ENCODE measurements at regions of chr2 and their contacts with region 1.

Region 1: DNA sequence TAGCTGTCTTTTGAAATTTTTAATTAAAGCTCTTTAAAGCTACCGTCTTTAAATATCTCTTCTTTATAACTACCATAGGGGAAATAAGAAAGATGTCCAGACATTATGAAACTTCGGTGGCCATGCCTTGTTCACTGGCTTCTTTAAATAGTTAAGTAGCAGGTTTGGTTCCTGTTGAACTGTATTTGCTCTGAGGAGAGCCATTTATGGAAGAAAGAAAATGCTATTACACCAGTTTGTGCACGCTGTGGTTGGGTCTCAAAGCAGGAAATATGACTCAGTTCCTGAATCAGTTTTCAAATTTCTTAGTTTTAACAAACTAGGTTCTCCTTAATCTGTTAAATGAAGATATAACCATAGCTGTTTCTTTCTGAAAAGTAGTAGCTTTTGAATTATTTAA is 12.2 kb downstream of the ARPC2 start:
- DNase-seq: peak; percentile 63
- H3K4me3 Mint-ChIP-seq: peak overlapping the region; percentile 33
- H3K27ac Mint-ChIP-seq: peak overlapping the region; percentile 86
- H3K4me1 Mint-ChIP-seq: peaks cover 82% of the 10 kb centered on the region
- H3K27me3 Mint-ChIP-seq: no peaks in the 10 kb centered on the region

Region 2: GRCh38 chr2:218186355-218186766 is 42.9 kb before region 1 on chr2:
- CTCF ChIA-PET with region 1: interaction called, 13 read pairs
- POLR2A ChIA-PET with region 1: interaction called, 6 read pairs
- DNase-seq: peak; percentile 75
- H3K4me3 Mint-ChIP-seq: no peak overlapping the region
- H3K27ac Mint-ChIP-seq: no peak overlapping the region
- H3K4me1 Mint-ChIP-seq: peaks cover 10% of the 10 kb centered on the region
- H3K27me3 Mint-ChIP-seq: peaks cover 8% of the 10 kb centered on the region

Region 3: DNA sequence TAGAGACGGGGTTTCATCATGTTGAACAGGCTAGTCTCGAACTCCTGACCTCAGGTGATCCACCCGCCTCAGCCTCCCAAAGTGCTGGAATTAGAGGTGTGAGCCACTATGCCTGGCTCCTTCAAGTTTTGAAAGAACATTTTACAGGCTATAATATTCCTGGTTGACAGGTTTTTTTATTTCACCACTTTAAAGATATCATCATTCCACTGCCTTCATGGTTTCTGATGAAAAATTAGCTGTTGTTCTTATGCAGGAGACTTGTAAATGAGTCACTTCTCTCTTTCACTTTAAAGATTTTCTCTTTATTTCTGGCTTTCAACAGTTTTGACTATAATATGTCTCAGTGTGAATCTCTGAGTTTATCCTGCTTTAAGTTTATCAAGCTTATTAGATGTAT is 20.2 kb before region 1 on chr2:
- CTCF ChIA-PET with region 1: interaction called, 12 read pairs
- POLR2A ChIA-PET with region 1: interaction called, 260 read pairs
- DNase-seq: no peak
- H3K4me3 Mint-ChIP-seq: no peak overlapping the region
- H3K27ac Mint-ChIP-seq: no peak overlapping the region
- H3K4me1 Mint-ChIP-seq: no peaks in the 10 kb centered on the region
- H3K27me3 Mint-ChIP-seq: peaks cover 13% of the 10 kb centered on the region

Region 4: DNA sequence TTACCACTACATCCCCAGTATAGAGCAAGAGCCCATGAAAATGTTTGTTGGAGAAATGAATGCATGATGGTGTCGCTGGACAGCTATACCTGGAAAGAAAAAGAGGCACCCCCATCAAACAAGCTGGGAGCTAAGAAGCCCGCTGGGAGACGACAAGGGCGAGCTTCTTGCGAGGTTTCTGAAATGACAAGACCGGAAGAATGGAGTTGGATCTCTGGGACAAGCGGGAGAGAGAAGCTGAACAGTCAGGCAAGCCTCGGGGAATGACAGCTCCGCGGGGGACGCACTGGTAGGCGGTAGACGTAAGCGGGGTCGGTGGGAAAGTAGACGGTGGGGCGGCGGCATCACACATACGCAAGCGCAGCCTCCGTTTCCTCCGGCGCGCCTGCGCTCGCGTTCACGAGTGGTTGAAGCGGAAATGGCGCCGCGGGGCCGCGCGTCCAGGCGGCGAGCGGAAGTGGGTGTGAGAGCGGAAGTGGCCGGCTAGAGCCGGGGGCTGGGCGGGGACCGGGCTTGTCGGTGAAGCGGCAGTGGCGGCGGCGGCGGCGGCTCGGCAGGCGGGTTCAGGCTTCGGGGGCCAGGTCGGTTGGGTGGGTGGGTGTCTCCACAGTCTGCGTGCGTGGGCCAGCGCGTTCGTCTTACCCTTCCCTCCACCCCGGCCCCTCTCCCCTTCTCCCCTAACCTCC is 12.4 kb before region 1 on chr2 and contains the start of gene ARPC2:
- CTCF ChIA-PET with region 1: interaction called, 62 read pairs
- POLR2A ChIA-PET with region 1: interaction called, 260 read pairs
- DNase-seq: peak; percentile 96
- H3K4me3 Mint-ChIP-seq: peak within 1 kb of the TSS; percentile 93
- H3K27ac Mint-ChIP-seq: peak within 1 kb of the TSS; percentile 92
- H3K4me1 Mint-ChIP-seq: peaks cover 41% of the 10 kb centered on the region
- H3K27me3 Mint-ChIP-seq: no peaks in the 10 kb centered on the region
- total RNA-seq, gene ARPC2: 765 to 778 TPM

Region 5: GRCh38 chr2:218245214-218245613 is 16.0 kb after region 1 on chr2:
- CTCF ChIA-PET with region 1: interaction called, 5 read pairs
- POLR2A ChIA-PET with region 1: interaction called, 16 read pairs
- DNase-seq: no peak
- H3K4me3 Mint-ChIP-seq: no peak overlapping the region
- H3K27ac Mint-ChIP-seq: no peak overlapping the region
- H3K4me1 Mint-ChIP-seq: peaks cover 17% of the 10 kb centered on the region
- H3K27me3 Mint-ChIP-seq: no peaks in the 10 kb centered on the region

Region 6: GRCh38 chr2:218286570-218287459 is 57.6 kb after region 1 on chr2:
- CTCF ChIA-PET with region 1: interaction called, 5 read pairs
- POLR2A ChIA-PET with region 1: interaction called, 13 read pairs
- DNase-seq: peak; percentile 87
- H3K4me3 Mint-ChIP-seq: peak overlapping the region; percentile 89
- H3K27ac Mint-ChIP-seq: peak overlapping the region; percentile 89
- H3K4me1 Mint-ChIP-seq: peaks cover 81% of the 10 kb centered on the region
- H3K27me3 Mint-ChIP-seq: no peaks in the 10 kb centered on the region

Measured in activated CD4-positive, alpha-beta memory T cell treated with anti-CD3 and anti-CD28 coated beads, Interleukin-2, amount 10 ng/mL, durations not matched to agents 7 days and 5 days (primary cell).